B cell (primary cell): ENCODE measurements at regions of chr7 and their contacts with region 1.

Region 1: DNA sequence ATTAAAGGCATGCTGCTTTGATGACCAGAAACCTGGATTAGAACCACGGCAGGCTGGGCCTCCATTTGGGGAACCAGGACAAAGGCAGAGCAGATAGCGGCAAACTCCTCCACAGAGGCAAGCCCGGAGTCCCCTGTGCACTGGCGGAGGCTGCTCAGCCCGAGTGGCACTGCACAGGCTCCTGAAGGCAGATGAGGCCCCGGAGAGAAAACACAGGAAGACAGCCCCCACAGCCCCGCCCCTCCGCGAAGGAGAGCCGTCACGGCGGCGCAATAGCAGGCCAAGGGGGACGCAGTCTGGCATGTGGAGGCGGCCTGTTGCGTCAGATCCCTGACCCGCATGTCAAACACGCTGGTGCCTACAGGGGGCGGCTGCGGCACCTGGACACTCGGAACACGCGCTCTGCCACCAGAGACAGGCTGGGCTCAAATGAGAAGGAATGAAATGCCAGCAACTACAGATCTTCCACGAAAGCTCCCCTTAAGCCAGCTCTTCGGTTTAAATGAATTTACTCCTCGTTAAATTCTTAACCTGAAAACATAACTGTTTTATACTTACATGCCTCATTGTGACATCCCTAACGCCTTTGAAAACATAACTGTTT is 128.5 kb downstream of the MAD1L1 start:
- DNase-seq: peak; percentile 86
- ATAC-seq: peak; percentile 56
- H3K4me3 ChIP-seq: peak overlapping the region in 3 of 5 experiments; percentile 2 to 40 (median 20)
- H3K4me3 Mint-ChIP-seq: peak overlapping the region; percentile 61
- H3K27ac ChIP-seq: no peak overlapping the region
- H3K27ac Mint-ChIP-seq: peak overlapping the region; percentile 56
- H3K4me1 ChIP-seq: peaks cover 25 to 36% of the 10 kb centered on the region in 2 donors
- H3K4me1 Mint-ChIP-seq: peaks cover 43% of the 10 kb centered on the region
- H3K27me3 ChIP-seq: no peaks in the 10 kb centered on the region
- H3K27me3 Mint-ChIP-seq: no peaks in the 10 kb centered on the region
- CTCF ChIP-seq: peak; percentile 66

Region 2: DNA sequence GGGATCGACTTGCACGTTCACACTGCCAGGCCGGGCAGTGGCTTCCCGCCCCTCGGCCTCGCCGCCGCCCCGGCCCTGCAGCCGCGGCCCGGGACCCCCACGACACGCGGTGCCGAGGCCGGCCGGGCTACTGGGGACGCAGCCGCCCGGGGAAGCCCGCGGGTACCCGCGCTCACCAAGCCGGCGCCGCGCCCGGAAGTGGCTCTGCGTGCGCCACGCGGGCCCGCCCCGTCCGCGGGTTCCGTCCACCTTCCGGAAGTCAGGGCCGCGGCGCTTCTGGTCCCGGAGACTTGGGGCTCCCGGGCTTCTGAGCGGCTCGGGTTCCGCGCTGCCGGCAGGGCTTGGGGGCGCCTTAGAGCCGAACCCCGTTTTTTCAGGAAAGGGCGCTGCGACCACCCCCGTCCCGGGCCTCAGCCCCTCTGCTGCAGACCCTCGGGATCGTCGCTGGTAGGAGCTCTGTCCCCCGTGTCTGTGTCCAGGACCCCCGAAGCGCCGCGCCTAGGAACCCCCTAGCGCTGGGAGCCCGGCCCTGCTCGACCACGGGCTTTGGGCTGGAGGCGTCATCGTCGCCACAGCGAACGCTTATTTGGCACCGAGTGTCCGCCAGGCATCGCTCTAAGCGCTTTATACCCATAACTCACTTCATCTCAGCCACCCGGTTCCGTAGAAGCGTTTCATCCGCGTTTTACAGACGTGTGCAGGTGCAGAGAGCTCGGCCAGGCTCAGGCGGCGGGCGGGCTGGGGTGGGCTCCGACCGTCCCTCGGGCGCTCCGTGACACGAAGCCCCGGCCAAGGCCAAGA is 534.2 kb before region 1 on chr7 and contains the start of gene PSMG3:
- CTCF ChIA-PET with region 1: no interaction called
- POLR2A ChIA-PET with region 1: no interaction called
- intact Hi-C with region 1: loop called (anchors 10 kb)
- DNase-seq: peak; percentile 92
- ATAC-seq: peak; percentile 91
- H3K4me3 ChIP-seq: peak within 1 kb of the TSS; percentile 18 to 87 (median 80)
- H3K4me3 Mint-ChIP-seq: peak within 1 kb of the TSS; percentile 90
- H3K27ac ChIP-seq: peak within 1 kb of the TSS; percentile 84 to 89
- H3K27ac Mint-ChIP-seq: peak within 1 kb of the TSS; percentile 91
- H3K4me1 ChIP-seq: peaks cover 12 to 24% of the 10 kb centered on the region in 2 donors
- H3K4me1 Mint-ChIP-seq: peaks cover 20% of the 10 kb centered on the region
- H3K27me3 ChIP-seq: no peaks in the 10 kb centered on the region
- H3K27me3 Mint-ChIP-seq: no peaks in the 10 kb centered on the region
- CTCF ChIP-seq: peak; percentile 30
- total RNA-seq, gene PSMG3: 27.4 and 28.6 TPM in 2 replicates

Region 3: GRCh38 chr7:1919539-1920265 is 184.5 kb before region 1 on chr7:
- CTCF ChIA-PET with region 1: no interaction called
- POLR2A ChIA-PET with region 1: interaction called, 3 read pairs
- intact Hi-C with region 1: loop called (anchors 10 kb)
- DNase-seq: no peak
- ATAC-seq: peak; percentile 38
- H3K4me3 ChIP-seq: peak overlapping the region; percentile 4 to 46 (median 39)
- H3K4me3 Mint-ChIP-seq: peak overlapping the region; percentile 88
- H3K27ac ChIP-seq: peak overlapping the region in 1 of 2 donors; percentile 19
- H3K27ac Mint-ChIP-seq: peak overlapping the region; percentile 66
- H3K4me1 ChIP-seq: peaks cover 26 to 32% of the 10 kb centered on the region in 2 donors
- H3K4me1 Mint-ChIP-seq: peaks cover 34% of the 10 kb centered on the region
- H3K27me3 ChIP-seq: no peaks in the 10 kb centered on the region
- H3K27me3 Mint-ChIP-seq: no peaks in the 10 kb centered on the region
- CTCF ChIP-seq: no peak

Region 4: GRCh38 chr7:1940402-1940786 is 163.8 kb before region 1 on chr7:
- CTCF ChIA-PET with region 1: no interaction called
- POLR2A ChIA-PET with region 1: interaction called, 5 read pairs
- intact Hi-C with region 1: loop called (anchors 1 kb)
- DNase-seq: peak; percentile 92
- ATAC-seq: peak; percentile 98
- H3K4me3 ChIP-seq: peak overlapping the region; percentile 46 to 95 (median 77)
- H3K4me3 Mint-ChIP-seq: peak overlapping the region; percentile 94
- H3K27ac ChIP-seq: peak overlapping the region; percentile 91 to 98
- H3K27ac Mint-ChIP-seq: peak overlapping the region; percentile 97
- H3K4me1 ChIP-seq: peaks cover 27 to 36% of the 10 kb centered on the region in 2 donors
- H3K4me1 Mint-ChIP-seq: peaks cover 43% of the 10 kb centered on the region
- H3K27me3 ChIP-seq: no peaks in the 10 kb centered on the region
- H3K27me3 Mint-ChIP-seq: no peaks in the 10 kb centered on the region
- CTCF ChIP-seq: no peak

Region 5: DNA sequence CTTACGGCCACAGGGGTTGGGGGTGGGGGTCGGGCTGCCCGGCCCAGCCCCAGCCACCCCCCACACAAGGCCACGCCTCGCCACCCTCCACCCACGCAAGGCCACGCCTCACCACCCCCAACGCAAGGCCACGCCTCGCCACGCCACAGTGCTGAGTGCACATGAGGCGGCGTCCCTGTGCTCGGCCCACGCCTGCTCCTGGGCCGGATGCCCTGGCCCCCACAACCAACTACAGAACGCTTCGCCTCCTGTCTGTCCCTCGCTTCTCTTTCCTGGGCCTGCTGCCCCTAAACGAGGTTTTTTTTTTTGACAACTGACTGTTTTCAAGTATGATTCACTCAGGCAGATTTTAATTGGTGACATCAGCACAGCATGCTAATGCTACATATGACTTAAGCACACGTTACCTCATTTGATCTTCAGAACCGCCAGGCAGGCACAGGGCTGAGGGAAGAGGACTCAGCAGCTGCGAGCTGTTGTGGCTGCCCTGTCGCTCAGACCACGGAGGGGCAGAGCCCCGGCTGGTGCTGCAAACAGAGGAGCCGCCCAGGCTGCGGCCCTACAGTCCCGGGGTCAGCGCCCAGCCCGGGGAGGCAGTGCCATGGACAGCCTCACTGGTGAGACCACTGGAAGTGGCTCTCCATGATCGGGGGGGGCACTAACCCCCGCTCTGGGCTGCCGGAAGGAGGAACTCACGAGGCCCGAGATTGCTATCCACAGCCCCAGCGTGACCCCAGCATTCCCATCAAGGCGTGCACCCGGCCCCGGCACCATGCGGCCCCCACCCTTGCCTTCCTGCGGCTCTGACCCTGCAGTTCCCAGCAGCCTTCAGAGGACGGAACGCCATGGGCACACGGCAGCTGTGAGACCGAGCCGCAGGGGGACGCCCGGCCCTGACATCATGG is 84.3 kb before region 1 on chr7:
- CTCF ChIA-PET with region 1: no interaction called
- POLR2A ChIA-PET with region 1: no interaction called
- intact Hi-C with region 1: loop called (anchors 5 kb)
- DNase-seq: peak; percentile 88
- ATAC-seq: peak; percentile 85
- H3K4me3 ChIP-seq: peak overlapping the region in 4 of 5 experiments; percentile 14 to 42 (median 38)
- H3K4me3 Mint-ChIP-seq: peak overlapping the region; percentile 85
- H3K27ac ChIP-seq: peak overlapping the region; percentile 81 to 93
- H3K27ac Mint-ChIP-seq: peak overlapping the region; percentile 93
- H3K4me1 ChIP-seq: peaks cover 35 to 36% of the 10 kb centered on the region in 2 donors
- H3K4me1 Mint-ChIP-seq: peaks cover 52% of the 10 kb centered on the region
- H3K27me3 ChIP-seq: no peaks in the 10 kb centered on the region
- H3K27me3 Mint-ChIP-seq: no peaks in the 10 kb centered on the region
- CTCF ChIP-seq: no peak

Region 6: DNA sequence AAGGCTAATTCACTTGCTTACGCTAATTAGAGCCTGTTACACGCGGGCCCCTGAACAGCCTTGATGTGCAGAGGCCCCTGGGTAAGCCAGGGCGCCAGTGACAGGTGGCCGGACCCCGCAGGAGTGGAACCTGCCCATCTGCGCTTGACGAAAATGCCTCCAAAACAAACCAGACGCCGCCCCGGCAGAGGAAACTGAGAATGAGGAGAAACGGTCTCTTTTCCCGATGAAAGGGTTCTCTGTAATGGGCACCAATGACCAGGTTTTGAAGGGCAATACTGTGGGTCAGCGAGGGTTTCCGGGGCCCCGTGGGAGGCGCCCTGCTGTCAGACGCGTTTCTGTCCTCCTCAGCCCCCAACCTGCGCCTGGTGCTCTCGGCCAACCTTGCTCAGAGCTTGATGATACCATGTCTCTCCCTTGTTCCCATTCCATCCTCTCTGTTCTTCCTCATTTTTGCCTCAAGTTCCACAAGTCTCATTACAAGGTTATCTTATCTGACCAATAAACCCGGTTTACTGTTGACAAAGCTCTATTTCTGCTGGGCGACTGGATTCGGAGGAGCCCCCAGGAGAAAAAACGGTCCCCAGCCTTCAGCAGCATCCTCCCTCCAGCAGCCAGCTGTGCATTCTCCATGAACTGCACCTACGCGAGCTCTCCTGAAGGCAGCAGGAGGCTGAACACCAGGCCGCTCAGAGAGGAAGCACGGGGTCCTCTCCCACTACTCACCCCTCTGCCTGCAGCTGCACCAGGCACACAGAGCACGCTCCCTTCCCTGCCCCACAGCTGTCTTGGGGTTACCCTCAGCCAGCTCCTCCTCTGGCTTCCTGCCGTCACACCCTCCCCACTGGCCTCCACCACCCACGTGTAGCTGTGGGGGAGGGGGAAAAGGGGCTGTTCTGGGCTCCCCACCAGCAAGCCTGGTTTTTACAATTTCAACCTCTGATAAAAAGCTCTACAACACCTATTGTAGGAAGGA is 73.4 kb before region 1 on chr7:
- CTCF ChIA-PET with region 1: no interaction called
- POLR2A ChIA-PET with region 1: no interaction called
- intact Hi-C with region 1: no loop called
- DNase-seq: peak; percentile 46
- ATAC-seq: peak; percentile 66
- H3K4me3 ChIP-seq: no peak overlapping the region
- H3K4me3 Mint-ChIP-seq: peak overlapping the region; percentile 26
- H3K27ac ChIP-seq: no peak overlapping the region
- H3K27ac Mint-ChIP-seq: no peak overlapping the region
- H3K4me1 ChIP-seq: peaks cover 20 to 24% of the 10 kb centered on the region in 2 donors
- H3K4me1 Mint-ChIP-seq: peaks cover 33% of the 10 kb centered on the region
- H3K27me3 ChIP-seq: no peaks in the 10 kb centered on the region
- H3K27me3 Mint-ChIP-seq: no peaks in the 10 kb centered on the region
- CTCF ChIP-seq: no peak

Region 7: DNA sequence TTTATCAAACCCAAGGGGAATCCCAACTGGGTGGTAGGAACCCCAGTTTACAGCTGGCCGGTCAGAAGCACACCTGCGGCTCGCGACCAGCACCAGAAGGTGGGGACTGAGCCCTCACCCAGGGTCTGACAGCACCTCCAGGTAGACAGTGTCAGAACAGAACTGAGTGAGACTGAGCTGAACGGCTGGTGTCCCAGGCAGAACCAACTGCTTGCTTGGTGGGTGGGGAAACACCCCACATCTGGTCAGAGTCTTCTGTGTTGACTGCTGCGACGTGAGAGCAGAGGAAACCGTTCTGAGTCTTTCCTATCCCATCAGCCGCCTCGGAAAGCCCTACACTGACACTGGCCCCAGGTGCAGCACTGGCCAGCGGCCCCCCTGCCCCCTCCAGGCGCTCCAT is 32.2 kb before region 1 on chr7:
- CTCF ChIA-PET with region 1: interaction called, 7 read pairs
- POLR2A ChIA-PET with region 1: no interaction called
- intact Hi-C with region 1: loop called (anchors 1 kb)
- DNase-seq: peak; percentile 79
- ATAC-seq: peak; percentile 90
- H3K4me3 ChIP-seq: no peak overlapping the region
- H3K4me3 Mint-ChIP-seq: peak overlapping the region; percentile 78
- H3K27ac ChIP-seq: peak overlapping the region in 1 of 2 donors; percentile 48
- H3K27ac Mint-ChIP-seq: peak overlapping the region; percentile 90
- H3K4me1 ChIP-seq: peaks cover 30 to 55% of the 10 kb centered on the region in 2 donors
- H3K4me1 Mint-ChIP-seq: peaks cover 45% of the 10 kb centered on the region
- H3K27me3 ChIP-seq: no peaks in the 10 kb centered on the region
- H3K27me3 Mint-ChIP-seq: no peaks in the 10 kb centered on the region
- CTCF ChIP-seq: no peak

Region 8: DNA sequence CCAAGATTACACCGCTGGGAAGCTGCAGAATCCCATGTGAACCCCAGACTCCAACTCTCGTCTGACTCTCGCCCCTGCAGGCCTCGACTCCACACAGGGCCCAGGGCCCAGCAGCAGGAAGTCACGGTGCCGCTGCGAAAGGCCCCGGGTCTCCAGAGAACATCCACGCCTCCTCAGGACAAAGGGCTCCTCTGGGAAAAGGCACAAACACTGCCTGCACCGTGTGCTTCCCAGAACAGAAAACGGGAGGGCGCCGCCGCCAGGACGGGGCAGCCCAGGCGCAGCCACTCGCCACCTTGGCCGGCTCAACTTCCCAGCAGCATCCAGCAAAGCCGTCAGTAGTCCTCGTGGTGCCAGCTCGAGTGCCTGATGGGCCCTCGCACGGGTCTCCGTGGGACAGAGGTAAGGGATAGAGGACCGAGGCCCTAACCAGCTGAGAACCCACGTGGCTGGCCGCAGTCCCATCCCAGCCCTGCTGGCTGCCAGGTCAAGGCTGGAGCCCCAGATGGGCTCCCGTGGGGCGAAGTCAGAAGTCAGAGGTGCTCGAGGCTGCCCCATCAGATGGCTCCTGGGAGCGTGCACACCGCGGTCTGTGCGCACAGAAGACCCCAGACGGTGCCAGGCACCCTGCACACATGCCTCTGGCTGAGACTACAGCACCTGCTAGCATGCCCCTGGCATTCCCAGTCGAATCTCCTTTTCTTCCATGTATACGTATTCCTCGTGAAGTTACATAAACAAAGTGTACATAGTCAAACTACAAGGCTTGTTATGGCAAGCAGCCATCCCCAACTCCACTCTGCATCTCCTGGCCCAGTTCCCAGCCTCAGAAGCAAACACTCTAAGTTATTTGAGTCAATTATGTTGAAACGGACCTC is 68.3 kb after region 1 on chr7:
- CTCF ChIA-PET with region 1: no interaction called
- POLR2A ChIA-PET with region 1: no interaction called
- intact Hi-C with region 1: no loop called
- DNase-seq: no peak
- ATAC-seq: no peak
- H3K4me3 ChIP-seq: no peak overlapping the region
- H3K4me3 Mint-ChIP-seq: no peak overlapping the region
- H3K27ac ChIP-seq: no peak overlapping the region
- H3K27ac Mint-ChIP-seq: no peak overlapping the region
- H3K4me1 ChIP-seq: no peaks in the 10 kb centered on the region
- H3K4me1 Mint-ChIP-seq: no peaks in the 10 kb centered on the region
- H3K27me3 ChIP-seq: no peaks in the 10 kb centered on the region
- H3K27me3 Mint-ChIP-seq: no peaks in the 10 kb centered on the region
- CTCF ChIP-seq: no peak

Region 9: GRCh38 chr7:2209146-2209960 is 105.1 kb after region 1 on chr7:
- CTCF ChIA-PET with region 1: interaction called, 20 read pairs
- POLR2A ChIA-PET with region 1: no interaction called
- intact Hi-C with region 1: loop called (anchors 1 kb)
- DNase-seq: peak; percentile 74
- ATAC-seq: peak; percentile 75
- H3K4me3 ChIP-seq: no peak overlapping the region
- H3K4me3 Mint-ChIP-seq: no peak overlapping the region
- H3K27ac ChIP-seq: no peak overlapping the region
- H3K27ac Mint-ChIP-seq: peak overlapping the region; percentile 7
- H3K4me1 ChIP-seq: peaks cover 0 to 5% of the 10 kb centered on the region in 2 donors
- H3K4me1 Mint-ChIP-seq: peaks cover 9% of the 10 kb centered on the region
- H3K27me3 ChIP-seq: no peaks in the 10 kb centered on the region
- H3K27me3 Mint-ChIP-seq: no peaks in the 10 kb centered on the region
- CTCF ChIP-seq: peak; percentile 71